CD4-positive, alpha-beta T cell (primary cell): ENCODE measurements at regions of chr12 and their contacts with region 1.

Region 1: DNA sequence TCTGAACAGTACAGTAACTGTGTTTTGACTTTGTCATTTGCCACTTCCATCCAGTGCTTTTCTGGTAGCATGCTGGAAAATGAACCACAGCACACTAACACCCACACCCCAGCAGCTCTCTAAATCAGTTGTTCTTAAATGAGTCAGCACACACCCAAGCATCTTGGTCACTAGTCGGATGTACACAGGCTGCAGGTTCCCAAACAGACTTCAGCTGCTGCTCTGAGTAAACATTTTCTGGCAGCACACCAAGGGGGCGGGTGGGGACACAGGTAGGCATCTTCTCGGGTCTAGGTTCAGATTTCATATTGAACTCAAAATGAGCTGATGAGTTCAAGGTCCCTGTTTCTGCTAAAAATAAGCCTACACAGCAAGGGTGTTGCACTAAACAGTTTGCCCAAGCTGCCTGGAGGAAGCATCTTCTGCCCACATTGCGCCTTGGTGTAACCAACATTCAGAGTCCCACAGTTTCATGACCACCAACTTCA is 39.8 kb downstream of the IFNG start:
- DNase-seq: peak in 11 of 14 experiments; percentile 2 to 72 (median 13)
- ATAC-seq: peak; percentile 37
- H3K4me3 ChIP-seq: no peak overlapping the region
- H3K4me3 Mint-ChIP-seq: no peak overlapping the region
- H3K27ac ChIP-seq: no peak overlapping the region
- H3K27ac Mint-ChIP-seq: no peak overlapping the region
- H3K4me1 ChIP-seq: peaks cover 18% of the 10 kb centered on the region
- H3K4me1 Mint-ChIP-seq: peaks cover 20% of the 10 kb centered on the region
- H3K27me3 ChIP-seq: no peaks in the 10 kb centered on the region
- H3K27me3 Mint-ChIP-seq: no peaks in the 10 kb centered on the region
- CTCF ChIP-seq: no peak

Region 2: DNA sequence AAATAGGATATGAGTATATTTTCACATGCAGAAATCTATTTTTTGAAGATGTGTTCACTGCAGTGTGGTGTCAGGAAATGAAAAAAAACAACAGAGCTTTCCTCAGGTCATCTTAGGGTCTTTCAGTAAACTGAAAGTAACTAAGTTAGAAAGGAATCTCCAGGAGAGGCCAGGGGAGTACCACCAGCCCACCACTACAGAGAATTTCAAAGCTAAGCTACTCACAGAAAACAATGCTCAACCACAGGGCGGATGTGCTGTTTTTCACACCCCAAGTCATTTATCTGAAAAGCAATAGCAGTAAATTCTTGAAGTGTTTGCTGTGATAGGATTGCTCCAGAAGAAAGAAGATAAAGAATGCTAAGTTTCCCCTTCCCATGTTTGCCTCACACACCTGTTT is 39.2 kb before region 1 on chr12:
- CTCF ChIA-PET with region 1: no interaction called
- POLR2A ChIA-PET with region 1: no interaction called
- intact Hi-C with region 1: no loop called
- DNase-seq: peak in 5 of 14 experiments; percentile 3 to 73 (median 17)
- ATAC-seq: peak; percentile 24
- H3K4me3 ChIP-seq: no peak overlapping the region
- H3K4me3 Mint-ChIP-seq: no peak overlapping the region
- H3K27ac ChIP-seq: no peak overlapping the region
- H3K27ac Mint-ChIP-seq: no peak overlapping the region
- H3K4me1 ChIP-seq: no peaks in the 10 kb centered on the region
- H3K4me1 Mint-ChIP-seq: peaks cover 5% of the 10 kb centered on the region
- H3K27me3 ChIP-seq: no peaks in the 10 kb centered on the region
- H3K27me3 Mint-ChIP-seq: no peaks in the 10 kb centered on the region
- CTCF ChIP-seq: no peak

Region 3: DNA sequence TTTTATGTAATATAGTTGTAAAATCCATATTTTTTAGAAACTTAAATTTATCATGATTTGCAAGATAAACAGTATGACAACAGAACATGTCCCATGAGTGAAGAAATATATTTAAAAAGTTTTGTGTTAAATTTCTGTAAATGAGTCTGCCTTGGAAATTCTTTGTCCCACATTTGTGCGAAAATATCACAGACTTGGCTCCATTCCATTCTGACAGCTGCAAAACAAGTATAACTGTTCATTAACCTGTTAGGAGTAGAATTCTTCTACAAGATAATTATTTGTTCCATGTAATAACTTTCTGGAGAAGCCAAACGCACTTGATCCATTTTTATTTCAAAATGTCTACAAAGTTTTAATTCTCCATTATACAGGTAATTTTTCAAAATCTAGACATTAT is 174.5 kb after region 1 on chr12:
- CTCF ChIA-PET with region 1: no interaction called
- POLR2A ChIA-PET with region 1: no interaction called
- intact Hi-C with region 1: no loop called
- DNase-seq: no peak
- ATAC-seq: no peak
- H3K4me3 ChIP-seq: no peak overlapping the region
- H3K4me3 Mint-ChIP-seq: no peak overlapping the region
- H3K27ac ChIP-seq: no peak overlapping the region
- H3K27ac Mint-ChIP-seq: no peak overlapping the region
- H3K4me1 ChIP-seq: peaks cover 4% of the 10 kb centered on the region
- H3K4me1 Mint-ChIP-seq: peaks cover 22% of the 10 kb centered on the region
- H3K27me3 ChIP-seq: no peaks in the 10 kb centered on the region
- H3K27me3 Mint-ChIP-seq: no peaks in the 10 kb centered on the region
- CTCF ChIP-seq: no peak

Region 4: DNA sequence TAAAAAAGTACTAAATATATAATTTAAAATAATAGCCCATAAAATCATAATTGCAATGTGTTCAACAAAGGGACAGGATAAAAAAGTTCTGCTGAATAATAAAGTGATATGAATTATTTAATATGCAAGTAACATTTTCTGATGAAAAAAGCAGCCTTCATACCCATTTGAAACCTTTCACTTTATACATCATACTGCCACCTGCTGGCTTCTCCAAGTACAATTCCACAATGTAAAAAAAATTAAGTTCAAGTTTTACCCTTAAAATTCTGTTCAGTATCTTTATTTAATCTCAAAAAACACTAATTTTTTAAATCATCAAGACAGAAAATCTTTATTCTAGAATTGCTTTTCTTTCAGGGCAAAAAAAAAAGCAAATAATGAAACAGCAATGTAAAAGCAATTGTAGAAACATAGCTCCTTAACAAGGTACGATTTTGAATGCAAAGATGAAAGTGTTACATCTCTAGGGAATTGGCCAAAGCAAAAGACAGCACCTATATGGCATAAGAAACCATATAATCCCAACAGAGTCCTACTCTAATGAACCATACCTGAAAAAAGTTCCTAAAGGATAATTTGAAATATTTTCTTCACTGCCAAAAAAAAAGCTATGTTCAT is 197.4 kb after region 1 on chr12:
- CTCF ChIA-PET with region 1: no interaction called
- POLR2A ChIA-PET with region 1: no interaction called
- intact Hi-C with region 1: loop called in 1 of 2 experiments (anchors 10 kb)
- DNase-seq: peak in 10 of 14 experiments; percentile 16 to 79 (median 24)
- ATAC-seq: no peak
- H3K4me3 ChIP-seq: no peak overlapping the region
- H3K4me3 Mint-ChIP-seq: no peak overlapping the region
- H3K27ac ChIP-seq: no peak overlapping the region
- H3K27ac Mint-ChIP-seq: no peak overlapping the region
- H3K4me1 ChIP-seq: no peaks in the 10 kb centered on the region
- H3K4me1 Mint-ChIP-seq: no peaks in the 10 kb centered on the region
- H3K27me3 ChIP-seq: no peaks in the 10 kb centered on the region
- H3K27me3 Mint-ChIP-seq: no peaks in the 10 kb centered on the region
- CTCF ChIP-seq: peak; percentile 86